ENCODE measurements at regions of chr4 and their contacts with region 1.

Region 1: GRCh38 chr4:105061136-105061696 is 85.5 kb upstream of the TET2 start:
- DNase-seq: peak; percentile 69
- H3K4me3 Mint-ChIP-seq: peak overlapping the region; percentile 31
- H3K27ac Mint-ChIP-seq: peak overlapping the region; percentile 91
- H3K4me1 Mint-ChIP-seq: peaks cover 57% of the 10 kb centered on the region
- H3K27me3 Mint-ChIP-seq: no peaks in the 10 kb centered on the region

Region 2: GRCh38 chr4:104896660-104897645 is 164.3 kb before region 1 on chr4:
- CTCF ChIA-PET with region 1: no interaction called
- intact Hi-C with region 1: loop called (anchors 2 kb)
- DNase-seq: no peak
- H3K4me3 Mint-ChIP-seq: no peak overlapping the region
- H3K27ac Mint-ChIP-seq: no peak overlapping the region
- H3K4me1 Mint-ChIP-seq: peaks cover 9% of the 10 kb centered on the region
- H3K27me3 Mint-ChIP-seq: no peaks in the 10 kb centered on the region

Region 3: DNA sequence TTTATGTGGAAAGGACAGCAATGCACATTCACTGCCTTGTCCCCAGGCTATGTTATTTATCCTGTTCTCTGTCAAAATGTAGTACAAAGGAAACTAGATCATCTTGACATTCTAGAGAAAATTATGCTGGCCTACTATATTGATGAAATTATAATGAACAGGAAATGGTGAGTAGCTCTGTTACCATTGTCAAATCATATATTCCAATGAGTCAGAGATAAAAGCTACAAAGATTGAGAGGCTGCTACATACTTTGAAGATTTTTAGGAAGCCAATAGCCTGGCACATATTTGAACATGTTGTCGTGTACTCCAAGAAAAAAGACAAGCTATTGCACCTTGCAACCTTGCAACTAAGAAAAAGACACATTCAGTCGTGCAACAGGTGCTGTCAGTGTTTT is 32.8 kb after region 1 on chr4:
- CTCF ChIA-PET with region 1: no interaction called
- intact Hi-C with region 1: loop called (anchors 2 kb)
- DNase-seq: no peak
- H3K4me3 Mint-ChIP-seq: no peak overlapping the region
- H3K27ac Mint-ChIP-seq: no peak overlapping the region
- H3K4me1 Mint-ChIP-seq: peaks cover 4% of the 10 kb centered on the region
- H3K27me3 Mint-ChIP-seq: peaks cover 16% of the 10 kb centered on the region

Region 4: GRCh38 chr4:105191621-105192210 is 130.5 kb after region 1 on chr4:
- CTCF ChIA-PET with region 1: no interaction called
- intact Hi-C with region 1: loop called (anchors 1 kb)
- DNase-seq: no peak
- H3K4me3 Mint-ChIP-seq: no peak overlapping the region
- H3K27ac Mint-ChIP-seq: peak overlapping the region; percentile 87
- H3K4me1 Mint-ChIP-seq: peaks cover 85% of the 10 kb centered on the region
- H3K27me3 Mint-ChIP-seq: no peaks in the 10 kb centered on the region

Region 5: DNA sequence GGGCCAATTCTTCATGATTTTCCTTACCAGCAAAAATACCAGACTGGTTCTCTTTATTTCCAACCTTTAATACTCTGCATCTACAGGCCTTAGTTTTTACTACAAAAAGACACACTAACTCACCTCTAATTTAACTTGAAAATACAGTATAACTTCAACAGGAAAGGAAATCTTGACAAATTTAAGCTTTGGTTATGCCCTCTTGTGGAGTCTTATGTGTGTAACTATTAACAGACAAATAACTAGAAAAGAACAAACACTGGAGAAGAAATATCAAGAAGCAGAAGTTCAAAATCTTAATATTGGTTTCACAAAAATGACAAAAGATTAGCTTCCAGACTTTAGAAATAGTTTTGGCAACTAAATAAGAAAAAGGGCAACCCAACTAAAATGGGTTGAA is 379.7 kb after region 1 on chr4:
- CTCF ChIA-PET with region 1: no interaction called
- intact Hi-C with region 1: no loop called
- DNase-seq: no peak
- H3K4me3 Mint-ChIP-seq: no peak overlapping the region
- H3K27ac Mint-ChIP-seq: no peak overlapping the region
- H3K4me1 Mint-ChIP-seq: peaks cover 2% of the 10 kb centered on the region
- H3K27me3 Mint-ChIP-seq: no peaks in the 10 kb centered on the region

Region 6: DNA sequence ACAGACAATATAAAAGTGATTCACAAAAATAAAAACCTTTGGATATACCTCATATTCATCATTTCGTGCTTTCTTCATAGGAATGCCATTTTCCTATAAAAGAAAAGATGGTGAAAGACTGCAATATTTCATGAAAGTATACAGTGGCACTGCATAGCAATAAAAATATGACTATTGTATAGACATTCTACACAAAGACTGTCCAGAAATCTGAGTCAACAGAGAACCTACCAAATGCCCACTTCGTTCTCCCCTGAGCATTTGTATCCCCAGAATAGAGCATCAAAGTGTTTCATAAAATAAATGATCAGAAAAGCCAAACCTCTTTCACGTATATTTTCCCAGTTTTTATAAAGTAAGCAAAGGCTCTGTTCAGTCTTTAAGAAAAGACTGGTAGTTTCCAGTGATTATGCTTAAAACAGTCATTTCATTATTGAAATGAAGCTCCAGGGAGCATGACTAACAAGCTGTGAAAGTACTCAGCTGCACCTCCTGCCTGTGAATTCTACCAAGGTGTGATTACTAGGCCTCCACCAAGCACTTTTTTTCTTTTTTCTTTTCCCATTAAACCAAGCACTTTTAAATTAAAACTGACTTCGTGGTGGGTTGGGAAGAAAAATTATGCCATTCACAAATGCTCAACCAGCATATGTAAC is 392.5 kb after region 1 on chr4:
- CTCF ChIA-PET with region 1: no interaction called
- intact Hi-C with region 1: loop called (anchors 1 kb)
- DNase-seq: peak; percentile 63
- H3K4me3 Mint-ChIP-seq: no peak overlapping the region
- H3K27ac Mint-ChIP-seq: peak overlapping the region; percentile 47
- H3K4me1 Mint-ChIP-seq: peaks cover 41% of the 10 kb centered on the region
- H3K27me3 Mint-ChIP-seq: no peaks in the 10 kb centered on the region

Region 7: GRCh38 chr4:106315968-106316772 is 1255.0 kb after region 1 on chr4 and contains the starts of genes AIMP1 and TBCK:
- CTCF ChIA-PET with region 1: no interaction called
- intact Hi-C with region 1: loop called (anchors 1 kb)
- DNase-seq: peak; percentile 90
- H3K4me3 Mint-ChIP-seq: no peak within 1 kb of the TSS
- H3K27ac Mint-ChIP-seq: no peak within 1 kb of the TSS
- H3K4me1 Mint-ChIP-seq: peaks cover 45% of the 10 kb centered on the region
- H3K27me3 Mint-ChIP-seq: no peaks in the 10 kb centered on the region
- total RNA-seq, gene AIMP1: 49.7 to 52.0 TPM
- total RNA-seq, gene TBCK: 19.4 to 21.6 TPM

Measured in activated naive CD4-positive, alpha-beta T cell treated with anti-CD3 and anti-CD28 coated beads for 36 hours (primary cell).